Dorsolateral prefrontal cortex (tissue), 120 donors: ENCODE measurements at regions of chr14 and their contacts with region 1.

Region 1: DNA sequence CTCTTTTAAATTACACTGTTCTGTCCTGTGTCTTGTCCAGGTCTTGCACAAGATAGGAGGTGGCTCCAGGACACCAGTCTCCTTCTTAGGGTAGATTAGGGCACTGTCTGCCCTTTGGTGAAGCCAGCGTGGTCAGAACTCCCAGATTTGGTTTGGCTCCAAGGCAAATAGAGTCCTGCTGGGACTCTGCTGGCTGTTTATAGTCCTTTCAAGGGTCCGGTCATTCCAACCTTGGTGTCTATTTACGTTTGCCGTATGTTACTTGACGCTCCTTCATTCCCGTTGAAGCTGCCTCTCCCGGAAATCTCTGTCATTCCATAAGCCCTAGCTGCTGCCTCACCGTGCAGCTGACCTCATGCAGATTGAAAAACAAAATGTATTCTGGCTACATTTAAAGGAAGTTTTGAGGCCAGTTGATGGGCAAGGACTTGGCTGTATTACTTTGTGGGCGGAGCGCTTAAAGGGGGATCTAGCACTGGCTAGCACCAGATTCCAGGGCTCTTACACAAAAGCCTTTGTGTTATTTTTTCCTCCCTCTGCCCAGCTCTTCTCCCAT is 180.6 kb downstream of the AKAP6 start:
- DNase-seq: peak; percentile 23 to 91 (median 85)
- H3K4me3 ChIP-seq: peak overlapping the region in 49 of 59 donors; percentile 5 to 61 (median 37)
- H3K27ac ChIP-seq: peak overlapping the region; percentile 80 to 100 (median 99)
- H3K27me3 ChIP-seq: no peaks in the 10 kb centered on the region
- CTCF ChIP-seq: peak in 14 of 56 donors; percentile 4 to 38 (median 16)

Region 2: GRCh38 chr14:32331206-32331605 is 178.5 kb before region 1 on chr14:
- intact Hi-C with region 1: loop called in 1 of 2 experiments (anchors 5 kb)
- DNase-seq: peak in 2 of 10 donors; percentile 31 to 46
- H3K4me3 ChIP-seq: peak overlapping the region; percentile 40 to 83 (median 69)
- H3K27ac ChIP-seq: peak overlapping the region in 58 of 59 donors; percentile 36 to 95 (median 88)
- H3K27me3 ChIP-seq: no peaks in the 10 kb centered on the region
- CTCF ChIP-seq: peak in 1 of 56 donors; percentile 12

Region 3: GRCh38 chr14:32430326-32430725 is 79.4 kb before region 1 on chr14:
- intact Hi-C with region 1: no loop called
- DNase-seq: peak in 2 of 10 donors; percentile 51 to 54
- H3K4me3 ChIP-seq: no peak overlapping the region
- H3K27ac ChIP-seq: peak overlapping the region in 53 of 59 donors; percentile 2 to 97 (median 69)
- H3K27me3 ChIP-seq: no peaks in the 10 kb centered on the region
- CTCF ChIP-seq: peak in 1 of 56 donors; percentile 13